ENCODE measurements at regions of chr9 and their contacts with region 1.

Region 1: DNA sequence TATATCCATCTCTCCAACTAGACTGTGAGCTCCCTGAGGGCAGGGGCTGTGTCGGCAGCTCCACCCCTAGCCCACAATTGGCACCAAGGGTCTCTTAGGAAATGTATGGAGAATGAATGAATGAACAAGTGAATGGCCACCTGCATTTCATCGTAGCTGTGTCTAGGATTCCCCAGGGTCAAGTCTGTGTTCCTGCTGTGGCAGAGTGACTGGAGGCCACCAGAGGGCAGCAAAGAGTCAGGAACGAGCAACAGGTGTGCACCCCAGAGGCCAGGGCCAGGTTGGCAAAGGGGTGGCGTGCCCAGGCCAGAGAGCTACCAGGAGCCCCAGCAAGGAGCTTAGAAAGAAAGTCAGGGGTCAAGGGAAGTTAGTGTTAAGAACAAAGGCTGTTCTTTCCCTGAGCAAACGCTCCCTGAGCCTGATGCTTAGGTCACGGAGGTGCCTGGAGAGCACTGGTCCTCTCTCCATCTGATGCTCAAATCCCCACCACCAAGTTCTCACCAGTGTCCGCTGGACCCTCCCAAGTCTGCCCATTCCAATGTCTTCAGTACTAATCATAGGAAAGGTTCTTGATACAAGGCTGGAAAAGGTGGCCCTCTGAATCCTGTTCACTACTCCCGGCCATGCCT is 160.7 kb downstream of the PAX5 start:
- DNase-seq: peak; percentile 81
- H3K4me3 ChIP-seq: no peak overlapping the region
- H3K27ac ChIP-seq: no peak overlapping the region
- H3K4me1 ChIP-seq: peaks cover 0 to 8% (median 3%) of the 10 kb centered on the region in 4 donors
- H3K27me3 ChIP-seq: no peaks in the 10 kb centered on the region
- CTCF ChIP-seq: peak; percentile 76 to 86 (median 82)
- EP300 ChIP-seq: no peak
- POLR2A ChIP-seq: no peak

Region 2: DNA sequence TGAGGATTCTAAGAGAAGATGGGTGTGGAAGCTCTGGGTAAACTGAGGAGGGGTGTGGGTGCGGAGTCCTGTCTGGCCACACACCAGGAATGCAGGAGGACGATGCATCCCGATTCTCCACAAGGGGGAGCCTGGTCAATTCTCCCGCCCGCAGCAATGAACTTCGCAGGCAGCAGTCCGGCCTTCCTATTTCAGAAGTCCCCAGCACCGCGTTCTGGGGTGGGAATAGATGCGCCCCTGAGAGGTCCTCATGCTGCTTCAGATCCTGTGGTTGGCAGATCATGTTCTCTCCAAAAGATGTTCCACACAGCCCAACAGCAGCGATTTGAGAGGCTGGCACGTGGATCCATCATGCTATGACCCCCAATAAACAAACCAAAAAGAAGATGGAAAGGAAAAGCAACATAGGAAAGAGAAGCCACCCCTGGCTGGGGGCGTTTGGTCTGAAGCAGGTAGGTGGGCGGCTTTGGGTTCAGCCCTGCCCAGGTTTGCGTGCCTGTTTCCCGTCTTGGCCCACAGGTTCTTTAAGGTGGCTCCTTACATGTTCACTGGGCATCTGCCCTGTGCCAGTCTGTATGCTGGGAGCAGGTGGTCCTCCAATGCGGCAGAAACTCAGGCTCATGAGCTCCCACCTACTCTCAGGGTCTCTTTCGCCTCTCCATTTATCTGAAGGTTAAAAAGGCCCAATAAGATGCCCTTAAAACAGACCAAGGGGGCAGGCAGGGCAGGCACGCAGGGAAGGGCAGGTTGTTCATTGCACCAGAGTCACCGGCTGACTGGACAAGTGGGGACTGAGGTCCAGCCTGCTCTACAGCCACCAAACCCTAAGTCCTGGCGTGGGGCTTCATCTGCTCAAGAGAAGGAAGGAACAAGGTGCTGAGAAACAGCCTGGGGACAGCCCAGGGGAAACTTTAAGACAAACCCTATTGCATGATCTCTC is 10.9 kb before region 1 on chr9:
- in situ Hi-C with region 1: no loop called
- intact Hi-C with region 1: no loop called
- DNase-seq: peak; percentile 46
- H3K4me3 ChIP-seq: no peak overlapping the region
- H3K27ac ChIP-seq: no peak overlapping the region
- H3K4me1 ChIP-seq: peaks cover 0 to 9% (median 3%) of the 10 kb centered on the region in 4 donors
- H3K27me3 ChIP-seq: peaks cover 18% of the 10 kb centered on the region
- CTCF ChIP-seq: peak; percentile 44 to 60 (median 58)
- EP300 ChIP-seq: no peak
- POLR2A ChIP-seq: no peak

Region 3: DNA sequence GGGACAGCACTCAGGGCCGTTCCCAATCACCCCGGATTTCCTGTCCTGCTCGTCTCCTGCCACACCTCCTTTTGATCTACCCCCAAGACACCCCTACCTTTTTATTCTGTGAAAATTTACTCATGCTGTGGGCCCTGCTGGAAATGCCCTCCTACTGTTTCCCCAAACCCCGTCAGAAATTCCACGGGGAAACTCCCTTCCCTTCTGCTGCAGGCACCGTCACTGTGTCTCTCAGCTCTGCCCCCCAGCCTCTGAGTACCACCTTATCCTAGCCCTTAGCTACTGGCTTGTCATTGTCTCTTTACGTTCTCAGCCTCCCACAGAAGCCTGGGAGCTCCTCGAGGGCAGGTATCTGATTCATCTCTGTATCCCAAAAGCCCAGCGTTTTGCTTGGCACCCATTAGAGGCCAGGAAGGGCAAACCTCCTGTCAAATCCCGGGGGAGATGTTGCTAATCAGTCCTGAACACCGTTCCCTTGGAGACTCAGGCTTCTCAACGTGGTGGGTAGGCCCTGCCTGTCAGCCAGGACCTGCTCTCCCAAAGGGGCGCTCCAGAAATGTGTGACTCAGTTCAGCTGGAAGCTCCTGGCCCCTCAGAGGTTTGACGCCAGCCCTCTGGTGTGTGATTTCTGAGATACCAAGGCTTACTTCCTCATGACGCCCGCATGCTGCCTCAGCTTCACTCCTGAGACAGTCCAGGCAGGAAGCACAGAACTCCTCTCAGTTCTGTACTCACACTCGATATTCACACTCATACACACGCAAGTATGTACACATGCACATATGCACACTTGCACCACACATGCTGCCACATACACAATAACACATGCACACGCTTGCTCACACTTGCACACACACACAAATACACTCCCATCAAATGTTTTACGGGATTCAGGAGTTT is 498.5 kb after region 1 on chr9:
- in situ Hi-C with region 1: loop called in 1 of 4 experiments (anchors 25 kb)
- intact Hi-C with region 1: no loop called
- DNase-seq: no peak
- H3K4me3 ChIP-seq: no peak overlapping the region
- H3K27ac ChIP-seq: no peak overlapping the region
- H3K4me1 ChIP-seq: no peaks in the 10 kb centered on the region
- H3K27me3 ChIP-seq: no peaks in the 10 kb centered on the region
- CTCF ChIP-seq: no peak
- EP300 ChIP-seq: no peak
- POLR2A ChIP-seq: no peak